ENCODE measurements at regions of chr6 and their contacts with region 1.

Region 1: DNA sequence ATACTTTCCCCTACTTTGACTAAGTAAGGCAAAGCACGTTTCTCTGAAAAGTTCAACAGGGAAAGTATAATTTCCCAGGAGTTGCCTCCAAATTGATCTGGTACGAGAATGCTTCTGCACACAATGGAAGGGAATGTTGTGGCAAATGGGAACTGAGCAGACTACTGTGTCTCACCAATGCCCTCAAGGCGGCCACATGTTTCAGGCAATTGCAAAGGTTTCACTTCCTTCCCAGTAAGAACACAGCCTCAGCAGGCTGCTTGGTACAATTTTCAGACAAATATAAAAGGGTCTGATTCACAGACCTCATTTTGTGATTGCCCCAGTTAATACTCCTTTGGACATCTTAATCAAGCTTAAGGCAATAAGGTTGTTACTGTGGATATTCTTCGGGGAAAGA is 71.2 kb downstream of the KIAA0319 start:
- DNase-seq: no peak
- ATAC-seq: no peak
- H3K4me3 ChIP-seq: no peak overlapping the region
- H3K27ac ChIP-seq: no peak overlapping the region
- H3K4me1 ChIP-seq: no peaks in the 10 kb centered on the region
- H3K27me3 ChIP-seq: no peaks in the 10 kb centered on the region
- CTCF ChIP-seq: no peak

Region 2: GRCh38 chr6:24600903-24601302 is 26.1 kb after region 1 on chr6:
- CTCF ChIA-PET with region 1: no interaction called
- POLR2A ChIA-PET with region 1: no interaction called
- in situ Hi-C with region 1: no loop called
- intact Hi-C with region 1: no loop called
- DNase-seq: no peak
- ATAC-seq: no peak
- H3K4me3 ChIP-seq: no peak overlapping the region
- H3K27ac ChIP-seq: no peak overlapping the region
- H3K4me1 ChIP-seq: peaks cover 4% of the 10 kb centered on the region; the same call in 1 of the 2 replicates
- H3K27me3 ChIP-seq: no peaks in the 10 kb centered on the region
- CTCF ChIP-seq: peak; percentile 49

Region 3: DNA sequence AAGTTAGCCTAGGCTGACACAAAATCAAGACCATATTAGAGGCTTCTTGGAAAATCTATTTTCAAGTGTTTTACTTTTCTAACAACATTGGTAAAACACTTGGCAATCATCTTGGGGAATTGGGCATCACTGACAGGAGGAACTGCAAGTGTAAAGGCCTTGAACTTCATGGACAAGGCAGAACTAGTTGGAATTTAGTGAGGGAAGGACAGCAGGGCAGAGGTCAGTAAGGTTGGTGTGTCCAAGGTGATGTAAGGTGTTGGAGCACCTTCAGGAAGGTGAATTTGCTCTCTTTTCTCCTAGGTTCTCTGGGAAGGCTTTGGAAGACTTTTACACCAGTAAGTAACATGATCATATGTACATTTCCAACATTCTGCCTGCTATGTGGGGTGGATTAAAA is 1178.3 kb after region 1 on chr6:
- CTCF ChIA-PET with region 1: no interaction called
- POLR2A ChIA-PET with region 1: interaction called, 10 read pairs
- in situ Hi-C with region 1: no loop called
- intact Hi-C with region 1: no loop called
- DNase-seq: no peak
- ATAC-seq: no peak
- H3K4me3 ChIP-seq: no peak overlapping the region
- H3K27ac ChIP-seq: no peak overlapping the region
- H3K4me1 ChIP-seq: no peaks in the 10 kb centered on the region
- H3K27me3 ChIP-seq: no peaks in the 10 kb centered on the region
- CTCF ChIP-seq: no peak

Measured in Panc1 (cell line).